HEK293 (cell line): ENCODE measurements at regions of chr18 and their contacts with region 1.

Region 1: DNA sequence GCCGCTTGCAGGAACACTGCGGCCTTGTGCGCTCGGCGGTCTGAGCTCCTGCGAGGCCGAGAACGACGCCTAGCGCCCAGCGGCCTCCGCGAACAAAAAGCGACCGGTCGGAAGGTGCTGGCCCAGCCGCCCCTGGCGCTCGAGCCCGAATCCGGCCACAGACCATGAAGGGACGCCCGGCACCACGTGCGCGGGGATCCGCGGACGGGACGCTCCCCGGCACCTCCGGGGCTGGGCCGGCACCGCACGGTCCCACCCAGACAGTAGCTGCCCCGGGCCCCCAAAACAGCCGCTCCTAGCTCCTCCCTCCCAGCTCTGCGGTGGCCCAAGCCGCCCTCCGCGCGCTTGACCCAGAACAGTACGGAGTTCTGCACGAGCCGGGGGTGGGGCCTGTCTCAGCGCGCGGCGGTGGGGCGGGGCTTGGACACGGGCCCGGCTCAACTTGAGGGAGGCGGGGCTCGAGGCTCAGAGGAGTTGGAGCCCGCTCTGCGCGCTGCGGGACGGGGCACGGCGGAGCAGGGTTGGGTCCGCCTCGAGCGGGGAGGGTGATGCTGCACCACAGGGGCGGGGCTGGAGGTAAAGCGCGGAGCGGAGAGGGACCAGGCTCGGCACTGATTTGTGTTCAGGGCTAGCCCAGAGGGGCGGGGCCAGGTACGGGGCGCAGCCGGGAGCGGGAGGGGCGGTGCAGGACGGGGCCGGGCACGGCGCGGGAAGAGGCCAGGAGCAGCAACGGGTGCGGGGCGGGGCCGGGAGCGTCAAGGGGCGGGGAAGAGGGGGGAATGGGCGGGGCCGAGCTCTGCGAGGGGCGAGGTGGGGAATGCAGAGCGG is 538 bp upstream of the IMPA2 start:
- H3K4me3 ChIP-seq: peak overlapping the region; percentile 52
- H3K27ac ChIP-seq: peak overlapping the region; percentile 94
- H3K4me1 ChIP-seq: peaks cover 3% of the 10 kb centered on the region; the same call in 1 of the 2 replicates
- CTCF ChIP-seq: peak; percentile 93

Region 2: GRCh38 chr18:11437046-11437445 is 543.7 kb before region 1 on chr18:
- CTCF ChIA-PET with region 1: no interaction called
- POLR2A ChIA-PET with region 1: no interaction called
- H3K4me3 ChIP-seq: no peak overlapping the region
- H3K27ac ChIP-seq: no peak overlapping the region
- H3K4me1 ChIP-seq: no peaks in the 10 kb centered on the region
- CTCF ChIP-seq: no peak

Region 3: GRCh38 chr18:11785458-11786055 is 195.2 kb before region 1 on chr18:
- CTCF ChIA-PET with region 1: no interaction called
- POLR2A ChIA-PET with region 1: no interaction called
- H3K4me3 ChIP-seq: no peak overlapping the region
- H3K27ac ChIP-seq: no peak overlapping the region
- H3K4me1 ChIP-seq: no peaks in the 10 kb centered on the region
- CTCF ChIP-seq: no peak

Region 4: DNA sequence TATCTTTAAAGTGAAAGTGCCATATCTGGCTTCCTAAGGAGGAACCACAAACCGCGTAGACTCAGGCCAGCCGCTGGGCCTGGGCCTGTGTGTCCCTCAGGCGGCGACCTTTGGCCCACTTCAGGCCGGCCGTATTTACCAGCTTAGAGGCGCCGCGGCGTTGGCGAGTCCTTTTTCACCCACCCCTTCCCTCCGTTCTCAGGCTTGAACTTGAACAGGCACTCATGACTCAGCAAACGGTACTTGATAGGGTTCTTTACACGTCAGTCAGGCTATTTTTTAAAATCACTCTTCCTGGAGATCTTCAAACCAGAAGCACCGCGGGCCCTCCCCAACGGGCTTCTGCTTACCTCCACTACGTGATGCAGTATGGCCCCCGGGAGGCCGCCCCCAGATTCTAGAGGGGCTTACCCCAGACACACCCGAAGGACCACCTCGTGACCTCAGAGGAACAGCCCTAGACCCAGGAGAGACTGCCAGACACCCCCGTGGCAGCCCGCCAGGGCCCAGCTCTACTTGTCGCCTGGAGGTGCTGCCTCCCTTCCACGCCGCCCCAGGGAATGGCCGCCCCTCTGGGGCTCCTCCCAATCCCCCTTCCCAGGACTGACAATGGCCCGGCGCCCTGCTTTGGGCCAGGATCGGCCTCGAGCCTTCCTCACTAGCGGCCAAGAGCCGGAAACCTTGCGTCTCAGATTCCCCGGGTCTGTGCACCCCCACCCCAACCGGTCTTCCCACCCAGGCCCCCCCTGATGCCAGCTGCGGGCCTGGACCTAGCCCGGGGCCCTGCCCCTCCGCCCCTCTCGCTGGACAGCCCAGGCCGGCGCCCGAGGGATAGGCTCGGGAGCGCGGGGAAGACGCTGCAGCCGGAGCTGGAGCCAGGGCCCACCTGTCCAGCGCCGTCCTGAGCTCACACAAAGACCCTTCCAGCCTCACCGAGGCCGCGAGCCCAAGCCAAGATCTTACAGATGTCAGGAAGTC is 33.3 kb before region 1 on chr18:
- CTCF ChIA-PET with region 1: interaction called, 3 read pairs
- POLR2A ChIA-PET with region 1: interaction called, 10 read pairs
- H3K4me3 ChIP-seq: no peak overlapping the region
- H3K27ac ChIP-seq: no peak overlapping the region
- H3K4me1 ChIP-seq: no peaks in the 10 kb centered on the region
- CTCF ChIP-seq: no peak